ENCODE measurements at regions of chr2 and their contacts with region 1.

Region 1: DNA sequence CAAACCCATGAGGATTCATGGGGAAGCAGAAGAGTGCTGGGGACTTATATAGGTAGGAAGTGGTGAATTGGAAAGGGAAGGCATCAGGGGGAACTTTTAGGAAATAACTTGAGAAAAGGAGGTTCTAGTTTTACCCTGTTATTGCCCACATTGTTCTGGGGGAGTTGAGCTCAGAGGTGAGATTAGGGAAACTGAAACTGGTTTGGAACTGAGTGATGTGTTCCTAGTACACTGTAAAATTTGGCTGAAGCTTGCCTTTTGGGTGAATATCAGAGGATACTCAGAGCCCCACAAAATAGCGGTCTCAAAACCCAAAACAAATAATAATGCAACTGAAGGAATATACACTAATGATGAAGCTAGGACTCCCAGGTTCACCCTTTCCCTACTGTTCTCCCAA is 39.6 kb upstream of the APOB start:
- DNase-seq: no peak
- ATAC-seq: no peak
- H3K4me3 ChIP-seq: no peak overlapping the region
- H3K27ac ChIP-seq: no peak overlapping the region
- H3K4me1 ChIP-seq: no peaks in the 10 kb centered on the region
- H3K27me3 ChIP-seq: no peaks in the 10 kb centered on the region
- CTCF ChIP-seq: no peak
- EP300 ChIP-seq: no peak
- POLR2A ChIP-seq: no peak
- RAD21 ChIP-seq: no peak

Region 2: GRCh38 chr2:21032338-21033236 is 50.9 kb before region 1 on chr2:
- CTCF ChIA-PET with region 1: no interaction called
- POLR2A ChIA-PET with region 1: no interaction called
- RAD21 ChIA-PET with region 1: no interaction called
- SMC1A ChIA-PET with region 1: interaction called, 4 read pairs
- in situ Hi-C with region 1: loop called (anchors 5 kb)
- intact Hi-C with region 1: no loop called
- DNase-seq: no peak
- ATAC-seq: no peak
- H3K4me3 ChIP-seq: no peak overlapping the region
- H3K27ac ChIP-seq: no peak overlapping the region
- H3K4me1 ChIP-seq: no peaks in the 10 kb centered on the region
- H3K27me3 ChIP-seq: 0 out of 4 replicates have a peak, but pooled peaks cover 0 to 2% of the 10 kb centered on the region in 2 experiments
- CTCF ChIP-seq: no peak
- EP300 ChIP-seq: no peak
- POLR2A ChIP-seq: no peak
- RAD21 ChIP-seq: no peak